CD8-positive, alpha-beta memory T cell (primary cell): ENCODE measurements at regions of chr2 and their contacts with region 1.

Region 1: DNA sequence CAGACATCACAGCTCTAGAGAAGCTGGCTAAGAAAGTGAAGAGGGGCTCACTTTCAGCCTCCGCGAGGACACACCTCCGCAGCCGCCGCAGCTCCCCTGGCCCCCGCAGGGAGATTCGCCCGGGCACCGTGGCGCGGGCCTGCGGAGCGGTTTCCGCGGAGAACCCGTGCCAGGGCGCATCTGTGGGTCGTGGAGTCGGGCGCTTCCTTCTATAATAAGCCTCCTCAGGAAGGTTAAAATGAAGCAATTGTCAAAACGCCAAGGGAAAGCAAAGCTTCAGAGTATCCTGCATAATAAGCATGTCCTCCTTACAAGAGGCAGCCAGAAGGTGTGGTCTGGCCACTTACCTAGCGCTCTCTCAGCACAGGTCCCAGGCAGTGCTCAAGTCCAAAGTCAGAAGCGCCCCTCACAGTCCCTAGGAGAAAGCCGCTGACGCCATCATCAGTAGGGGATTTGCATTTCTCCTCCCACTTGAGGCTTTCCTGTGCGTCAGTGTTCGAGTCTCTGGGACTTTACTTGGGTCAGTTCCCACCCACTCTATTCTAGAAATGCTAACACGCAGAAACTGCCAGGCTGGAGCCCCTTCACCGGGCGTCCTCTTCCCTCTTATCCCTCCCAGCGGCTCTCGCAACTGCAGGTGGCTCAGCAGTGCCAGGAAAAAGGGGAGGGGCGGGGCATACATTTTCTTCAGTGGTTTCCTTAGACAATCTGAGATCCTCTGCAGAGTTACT is at the start of gene STAT4:
- DNase-seq: peak; percentile 70 to 92 (median 89)
- H3K4me3 ChIP-seq: peak within 1 kb of the TSS; percentile 98
- H3K4me3 Mint-ChIP-seq: peak within 1 kb of the TSS; percentile 90 to 98 (median 98)
- H3K27ac ChIP-seq: peak within 1 kb of the TSS; percentile 97
- H3K27ac Mint-ChIP-seq: peak within 1 kb of the TSS; percentile 85 to 100 (median 96)
- H3K4me1 ChIP-seq: peaks cover 50% of the 10 kb centered on the region
- H3K4me1 Mint-ChIP-seq: peaks cover 65 to 76% (median 71%) of the 10 kb centered on the region in 3 donors
- H3K27me3 ChIP-seq: no peaks in the 10 kb centered on the region
- H3K27me3 Mint-ChIP-seq: peaks cover 0 to 2% of the 10 kb centered on the region in 2 donors
- total RNA-seq, gene STAT4: 53.0 to 54.7 TPM

Region 2: GRCh38 chr2:190849774-190850173 is 301.0 kb before region 1 on chr2:
- CTCF ChIA-PET with region 1: interaction called, 10 read pairs
- POLR2A ChIA-PET with region 1: no interaction called
- DNase-seq: no peak
- H3K4me3 ChIP-seq: no peak overlapping the region
- H3K4me3 Mint-ChIP-seq: no peak overlapping the region
- H3K27ac ChIP-seq: no peak overlapping the region
- H3K27ac Mint-ChIP-seq: no peak overlapping the region
- H3K4me1 ChIP-seq: no peaks in the 10 kb centered on the region
- H3K4me1 Mint-ChIP-seq: peaks cover 0 to 3% (median 2%) of the 10 kb centered on the region in 3 donors
- H3K27me3 ChIP-seq: no peaks in the 10 kb centered on the region
- H3K27me3 Mint-ChIP-seq: no peaks in the 10 kb centered on the region

Region 3: DNA sequence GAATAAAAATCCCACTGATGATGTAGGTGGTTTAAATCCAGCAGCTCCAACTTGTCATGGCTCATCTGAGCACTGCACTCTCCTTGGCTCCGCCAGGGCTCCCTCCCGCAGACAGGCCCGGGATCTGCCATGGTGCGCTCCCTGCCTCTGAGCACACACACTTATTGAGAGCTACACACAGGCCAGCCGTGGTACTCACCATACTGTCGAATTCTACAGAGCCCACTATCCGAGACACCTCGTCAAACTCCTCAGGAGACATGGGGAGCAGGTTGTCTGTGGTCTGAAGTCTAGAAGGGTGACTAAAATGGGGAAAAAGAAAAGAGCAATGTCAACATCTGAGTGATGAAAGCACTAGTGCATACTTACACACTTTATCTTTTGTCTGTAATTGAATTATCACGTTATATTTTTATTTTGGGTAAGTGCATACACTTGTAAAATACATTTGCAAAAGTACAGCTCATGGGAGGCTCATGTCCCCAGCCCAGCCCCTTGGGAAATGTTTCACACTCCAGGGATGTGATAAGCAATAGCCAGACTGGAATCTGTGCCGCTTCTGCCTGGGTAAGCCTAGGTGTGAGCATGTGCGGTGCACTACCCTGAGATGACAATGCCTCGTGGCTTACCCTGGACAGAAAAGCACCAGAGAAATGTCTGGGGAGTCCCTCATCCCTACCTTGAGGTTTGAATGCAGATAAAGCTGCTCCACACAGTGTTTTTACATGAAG is 176.0 kb before region 1 on chr2:
- CTCF ChIA-PET with region 1: no interaction called
- POLR2A ChIA-PET with region 1: no interaction called
- DNase-seq: no peak
- H3K4me3 ChIP-seq: no peak overlapping the region
- H3K4me3 Mint-ChIP-seq: no peak overlapping the region
- H3K27ac ChIP-seq: no peak overlapping the region
- H3K27ac Mint-ChIP-seq: peak overlapping the region; percentile 33 to 77 (median 56)
- H3K4me1 ChIP-seq: no peaks in the 10 kb centered on the region
- H3K4me1 Mint-ChIP-seq: peaks cover 3 to 8% (median 5%) of the 10 kb centered on the region in 3 donors
- H3K27me3 ChIP-seq: no peaks in the 10 kb centered on the region
- H3K27me3 Mint-ChIP-seq: peaks cover 0 to 2% of the 10 kb centered on the region in 2 donors

Region 4: DNA sequence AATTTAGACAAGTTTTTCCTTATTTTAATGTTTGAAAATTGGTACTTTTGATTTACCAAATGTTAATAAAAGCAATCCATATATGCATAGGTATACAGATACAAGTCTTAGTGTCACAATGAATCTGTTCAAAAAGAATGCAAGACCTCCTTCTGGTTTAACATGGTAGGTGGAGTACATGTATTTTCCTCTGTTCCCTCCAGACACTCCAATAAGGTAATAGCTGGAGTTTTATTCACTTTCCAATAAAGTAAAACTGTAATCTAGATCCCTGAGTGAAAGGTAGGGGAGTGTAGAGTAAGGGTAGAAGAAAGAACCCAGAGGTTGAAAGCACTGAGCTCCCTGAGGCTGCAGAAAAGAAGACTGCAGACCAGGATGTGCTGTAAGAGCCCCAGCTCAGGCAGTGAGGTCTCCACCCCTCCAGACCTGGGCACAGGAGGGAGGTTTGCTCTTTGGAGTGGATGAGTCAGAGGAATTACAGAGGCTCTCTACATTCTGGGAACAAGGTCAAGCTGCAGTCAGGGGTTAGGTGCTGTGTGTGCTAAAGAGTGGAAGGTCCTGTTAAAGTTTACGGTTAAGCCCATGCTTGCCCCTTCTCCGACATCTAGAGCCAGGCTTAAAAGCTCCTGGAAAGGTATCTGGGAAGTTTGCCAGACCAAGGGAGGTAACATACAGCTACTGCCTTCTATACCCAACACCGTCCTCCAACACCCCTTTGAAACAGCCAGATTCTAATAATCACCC is 109.2 kb before region 1 on chr2:
- CTCF ChIA-PET with region 1: interaction called, 390 read pairs
- POLR2A ChIA-PET with region 1: interaction called, 5 read pairs
- DNase-seq: no peak
- H3K4me3 ChIP-seq: no peak overlapping the region
- H3K4me3 Mint-ChIP-seq: no peak overlapping the region
- H3K27ac ChIP-seq: no peak overlapping the region
- H3K27ac Mint-ChIP-seq: peak overlapping the region in 7 of 8 donors; percentile 5 to 81 (median 64)
- H3K4me1 ChIP-seq: peaks cover 27% of the 10 kb centered on the region
- H3K4me1 Mint-ChIP-seq: peaks cover 36 to 45% (median 38%) of the 10 kb centered on the region in 3 donors
- H3K27me3 ChIP-seq: no peaks in the 10 kb centered on the region
- H3K27me3 Mint-ChIP-seq: no peaks in the 10 kb centered on the region

Region 5: GRCh38 chr2:191059308-191059707 is 91.5 kb before region 1 on chr2:
- CTCF ChIA-PET with region 1: interaction called, 390 read pairs
- POLR2A ChIA-PET with region 1: interaction called, 9 read pairs
- DNase-seq: no peak
- H3K4me3 ChIP-seq: no peak overlapping the region
- H3K4me3 Mint-ChIP-seq: no peak overlapping the region
- H3K27ac ChIP-seq: no peak overlapping the region
- H3K27ac Mint-ChIP-seq: peak overlapping the region; percentile 26 to 91 (median 73)
- H3K4me1 ChIP-seq: peaks cover 54% of the 10 kb centered on the region
- H3K4me1 Mint-ChIP-seq: peaks cover 64 to 75% (median 73%) of the 10 kb centered on the region in 3 donors
- H3K27me3 ChIP-seq: no peaks in the 10 kb centered on the region
- H3K27me3 Mint-ChIP-seq: no peaks in the 10 kb centered on the region

Region 6: DNA sequence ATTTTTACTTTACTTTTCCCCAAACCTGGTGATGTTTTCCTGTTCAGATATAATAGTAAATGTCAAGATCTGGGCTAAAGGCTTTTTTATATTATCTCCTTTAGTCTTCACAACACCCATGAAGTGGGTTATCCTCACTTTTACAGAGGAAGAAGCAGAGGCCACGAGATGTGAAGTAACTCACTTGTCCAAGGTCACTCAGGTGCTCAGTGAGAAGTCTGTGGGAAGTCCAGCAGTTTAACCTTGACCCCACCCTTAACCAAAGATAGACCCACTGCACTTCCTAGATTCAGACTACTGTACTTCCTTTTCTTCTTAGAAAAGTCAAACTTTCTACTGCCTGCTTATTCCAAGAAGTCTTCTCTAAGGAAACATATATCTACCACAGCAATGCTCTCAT is 80.5 kb before region 1 on chr2:
- CTCF ChIA-PET with region 1: interaction called, 23 read pairs
- POLR2A ChIA-PET with region 1: interaction called, 3 read pairs
- DNase-seq: no peak
- H3K4me3 ChIP-seq: no peak overlapping the region
- H3K4me3 Mint-ChIP-seq: peak overlapping the region; percentile 1 to 50 (median 14)
- H3K27ac ChIP-seq: no peak overlapping the region
- H3K27ac Mint-ChIP-seq: peak overlapping the region; percentile 68 to 96 (median 88)
- H3K4me1 ChIP-seq: peaks cover 45% of the 10 kb centered on the region
- H3K4me1 Mint-ChIP-seq: peaks cover 52 to 70% (median 69%) of the 10 kb centered on the region in 3 donors
- H3K27me3 ChIP-seq: no peaks in the 10 kb centered on the region
- H3K27me3 Mint-ChIP-seq: no peaks in the 10 kb centered on the region

Region 7: GRCh38 chr2:191165176-191165643 is 14.4 kb after region 1 on chr2:
- CTCF ChIA-PET with region 1: interaction called, 25 read pairs
- POLR2A ChIA-PET with region 1: no interaction called
- DNase-seq: peak in 2 of 5 donors; percentile 36 to 42
- H3K4me3 ChIP-seq: no peak overlapping the region
- H3K4me3 Mint-ChIP-seq: no peak overlapping the region
- H3K27ac ChIP-seq: no peak overlapping the region
- H3K27ac Mint-ChIP-seq: no peak overlapping the region
- H3K4me1 ChIP-seq: peaks cover 4% of the 10 kb centered on the region
- H3K4me1 Mint-ChIP-seq: peaks cover 3 to 6% (median 6%) of the 10 kb centered on the region in 3 donors
- H3K27me3 ChIP-seq: no peaks in the 10 kb centered on the region
- H3K27me3 Mint-ChIP-seq: peaks cover 3 to 10% of the 10 kb centered on the region in 2 donors

Region 8: GRCh38 chr2:191202881-191203397 is 52.2 kb after region 1 on chr2:
- CTCF ChIA-PET with region 1: interaction called, 6 read pairs
- POLR2A ChIA-PET with region 1: interaction called, 11 read pairs
- DNase-seq: peak in 4 of 5 donors; percentile 6 to 57 (median 18)
- H3K4me3 ChIP-seq: peak overlapping the region; percentile 26
- H3K4me3 Mint-ChIP-seq: peak overlapping the region; percentile 32 to 86 (median 66)
- H3K27ac ChIP-seq: no peak overlapping the region
- H3K27ac Mint-ChIP-seq: peak overlapping the region; percentile 84 to 96 (median 92)
- H3K4me1 ChIP-seq: peaks cover 43% of the 10 kb centered on the region
- H3K4me1 Mint-ChIP-seq: peaks cover 53 to 58% (median 57%) of the 10 kb centered on the region in 3 donors
- H3K27me3 ChIP-seq: no peaks in the 10 kb centered on the region
- H3K27me3 Mint-ChIP-seq: no peaks in the 10 kb centered on the region

Region 9: DNA sequence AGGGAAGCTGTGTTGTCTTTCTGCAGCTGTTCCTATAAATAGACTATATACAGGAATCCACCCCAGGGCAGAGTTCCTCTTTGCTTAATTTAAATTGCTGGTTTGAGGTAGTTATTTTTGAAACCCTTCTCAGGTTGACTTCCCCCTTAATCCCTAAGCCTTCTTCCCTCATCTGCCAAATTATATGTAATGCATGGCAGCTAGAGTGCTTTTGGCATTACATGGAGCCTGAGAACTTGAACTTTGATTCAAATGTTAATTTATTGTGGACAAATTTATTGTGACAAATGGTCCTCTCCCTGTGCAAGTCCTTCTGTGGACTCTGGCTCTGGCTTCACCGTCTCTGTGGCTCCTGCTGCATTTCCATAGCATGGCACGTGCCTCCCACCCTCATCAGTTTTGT is 123.6 kb after region 1 on chr2:
- CTCF ChIA-PET with region 1: no interaction called
- POLR2A ChIA-PET with region 1: no interaction called
- DNase-seq: no peak
- H3K4me3 ChIP-seq: no peak overlapping the region
- H3K4me3 Mint-ChIP-seq: no peak overlapping the region
- H3K27ac ChIP-seq: no peak overlapping the region
- H3K27ac Mint-ChIP-seq: no peak overlapping the region
- H3K4me1 ChIP-seq: no peaks in the 10 kb centered on the region
- H3K4me1 Mint-ChIP-seq: no peaks in the 10 kb centered on the region
- H3K27me3 ChIP-seq: no peaks in the 10 kb centered on the region
- H3K27me3 Mint-ChIP-seq: peaks cover 23 to 48% of the 10 kb centered on the region in 2 donors